Gastrocnemius medialis (tissue), 4 donors: ENCODE measurements at regions of chr7 and their contacts with region 1.

Region 1: GRCh38 chr7:140230861-140231770 is 54.3 kb upstream of the KDM7A start:
- DNase-seq: peak in 1 of 2 donors; percentile 19
- ATAC-seq: peak; percentile 40 to 53
- H3K4me3 ChIP-seq: peak overlapping the region; percentile 55 to 61 (median 60)
- H3K27ac ChIP-seq: peak overlapping the region; percentile 29 to 66 (median 52)
- H3K4me1 ChIP-seq: peaks cover 0 to 9% of the 10 kb centered on the region in 2 donors
- H3K27me3 ChIP-seq: peaks cover 11 to 38% (median 20%) of the 10 kb centered on the region in 3 donors
- CTCF ChIP-seq: no peak
- POLR2A ChIP-seq: no peak

Region 2: GRCh38 chr7:140022582-140023211 is 208.4 kb before region 1 on chr7:
- in situ Hi-C with region 1: no loop called
- intact Hi-C with region 1: no loop called
- DNase-seq: no peak
- ATAC-seq: no peak
- H3K4me3 ChIP-seq: no peak overlapping the region
- H3K27ac ChIP-seq: no peak overlapping the region
- H3K4me1 ChIP-seq: no peaks in the 10 kb centered on the region
- H3K27me3 ChIP-seq: no peaks in the 10 kb centered on the region
- CTCF ChIP-seq: no peak
- POLR2A ChIP-seq: no peak

Region 3: GRCh38 chr7:140121326-140121725 is 109.8 kb before region 1 on chr7:
- in situ Hi-C with region 1: no loop called
- intact Hi-C with region 1: no loop called
- DNase-seq: no peak
- ATAC-seq: no peak
- H3K4me3 ChIP-seq: no peak overlapping the region
- H3K27ac ChIP-seq: no peak overlapping the region
- H3K4me1 ChIP-seq: no peaks in the 10 kb centered on the region
- H3K27me3 ChIP-seq: no peaks in the 10 kb centered on the region
- CTCF ChIP-seq: no peak
- POLR2A ChIP-seq: no peak

Region 4: GRCh38 chr7:140192620-140193019 is 38.5 kb before region 1 on chr7:
- in situ Hi-C with region 1: no loop called
- intact Hi-C with region 1: loop called (anchors 5 kb)
- DNase-seq: no peak
- ATAC-seq: no peak
- H3K4me3 ChIP-seq: no peak overlapping the region
- H3K27ac ChIP-seq: no peak overlapping the region
- H3K4me1 ChIP-seq: no peaks in the 10 kb centered on the region
- H3K27me3 ChIP-seq: no peaks in the 10 kb centered on the region
- CTCF ChIP-seq: no peak
- POLR2A ChIP-seq: no peak

Region 5: DNA sequence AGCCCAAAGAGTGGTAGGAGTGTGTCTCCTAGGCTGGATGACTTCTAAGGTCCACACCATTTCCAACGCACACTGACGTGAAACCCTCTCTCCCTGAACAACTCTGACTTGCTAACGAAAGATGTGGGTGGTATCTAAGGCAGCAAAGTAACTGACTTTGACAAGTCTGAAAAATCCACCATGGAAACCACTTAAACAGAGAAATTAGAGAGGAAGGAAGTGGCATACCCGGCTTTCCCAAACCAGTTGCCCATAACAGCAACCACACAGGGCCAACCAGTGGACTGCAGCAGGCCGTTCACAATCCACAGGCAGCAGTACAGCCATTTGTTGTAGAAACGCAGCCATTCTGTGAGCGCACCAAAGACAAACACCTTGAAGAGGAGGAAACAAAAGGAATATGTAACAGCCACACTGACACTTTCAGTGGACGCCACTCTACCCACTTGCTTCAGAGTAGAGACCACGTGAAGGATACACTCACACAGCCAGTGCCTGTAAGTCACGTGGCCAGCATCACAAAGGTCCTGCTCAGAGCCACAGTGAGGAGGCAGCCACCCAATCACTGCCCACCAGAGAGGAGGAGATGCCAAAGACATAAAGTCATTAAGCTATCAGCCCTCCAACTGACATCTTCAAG is 127.4 kb after region 1 on chr7:
- in situ Hi-C with region 1: no loop called
- intact Hi-C with region 1: no loop called
- DNase-seq: no peak
- ATAC-seq: no peak
- H3K4me3 ChIP-seq: no peak overlapping the region
- H3K27ac ChIP-seq: no peak overlapping the region
- H3K4me1 ChIP-seq: no peaks in the 10 kb centered on the region
- H3K27me3 ChIP-seq: no peaks in the 10 kb centered on the region
- CTCF ChIP-seq: no peak
- POLR2A ChIP-seq: no peak

Region 6: GRCh38 chr7:141551094-141551781 is 1320.1 kb after region 1 on chr7 and contains the start of gene AGK:
- in situ Hi-C with region 1: no loop called
- intact Hi-C with region 1: no loop called
- DNase-seq: peak; percentile 36 to 52
- ATAC-seq: peak; percentile 77 to 93
- H3K4me3 ChIP-seq: peak within 1 kb of the TSS; percentile 72 to 86 (median 78)
- H3K27ac ChIP-seq: peak within 1 kb of the TSS; percentile 59 to 85 (median 72)
- H3K4me1 ChIP-seq: peaks cover 14 to 17% of the 10 kb centered on the region in 2 donors
- H3K27me3 ChIP-seq: no peaks in the 10 kb centered on the region
- CTCF ChIP-seq: no peak
- POLR2A ChIP-seq: peak in 1 of 2 donors; percentile 28
- total RNA-seq, gene AGK: 6.5 to 17.1 (median 11.5) TPM